Activated CD8-positive, alpha-beta T cell treated with anti-CD3 and anti-CD28 coated beads, Interleukin-2, amount 10 ng/mL, durations not matched to agents 7 days and 5 days (primary cell): ENCODE measurements at regions of chr12 and their contacts with region 1.

Region 1: DNA sequence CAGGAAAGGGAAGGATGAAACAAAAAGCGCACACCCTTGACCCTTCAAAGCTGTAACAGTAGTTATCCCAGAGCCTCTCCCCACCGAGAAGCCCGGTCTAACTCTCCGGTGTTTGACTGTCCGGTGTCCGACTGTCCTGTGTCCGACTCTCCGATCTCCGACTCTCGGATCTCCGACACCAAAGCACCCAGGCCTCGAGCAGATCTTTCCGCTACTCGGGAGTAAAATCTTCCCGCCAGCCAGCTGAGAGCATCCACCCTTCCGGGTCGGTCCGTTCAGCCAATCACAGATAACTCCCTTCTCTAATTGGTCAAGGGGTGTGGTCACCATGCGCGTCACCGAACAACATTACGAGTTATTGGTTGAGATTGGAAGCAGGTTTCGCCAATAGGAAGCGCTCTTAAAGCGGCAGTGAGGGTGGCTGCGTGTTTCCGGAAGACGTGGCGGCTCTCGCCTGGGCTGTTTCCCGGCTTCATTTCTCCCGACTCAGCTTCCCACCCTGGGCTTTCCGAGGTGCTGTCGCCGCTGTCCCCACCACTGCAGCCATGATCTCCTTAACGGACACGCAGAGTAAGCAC is at the starts of genes GOLT1B and RECQL:
- DNase-seq: peak; percentile 96
- ATAC-seq: peak; percentile 95
- H3K4me3 Mint-ChIP-seq: no peak within 1 kb of the TSS
- H3K27ac Mint-ChIP-seq: no peak within 1 kb of the TSS
- H3K4me1 Mint-ChIP-seq: peaks cover 54% of the 10 kb centered on the region
- H3K27me3 Mint-ChIP-seq: no peaks in the 10 kb centered on the region
- total RNA-seq, gene GOLT1B: 37.3 to 37.5 TPM
- total RNA-seq, gene RECQL: 92.3 to 92.6 TPM

Region 2: DNA sequence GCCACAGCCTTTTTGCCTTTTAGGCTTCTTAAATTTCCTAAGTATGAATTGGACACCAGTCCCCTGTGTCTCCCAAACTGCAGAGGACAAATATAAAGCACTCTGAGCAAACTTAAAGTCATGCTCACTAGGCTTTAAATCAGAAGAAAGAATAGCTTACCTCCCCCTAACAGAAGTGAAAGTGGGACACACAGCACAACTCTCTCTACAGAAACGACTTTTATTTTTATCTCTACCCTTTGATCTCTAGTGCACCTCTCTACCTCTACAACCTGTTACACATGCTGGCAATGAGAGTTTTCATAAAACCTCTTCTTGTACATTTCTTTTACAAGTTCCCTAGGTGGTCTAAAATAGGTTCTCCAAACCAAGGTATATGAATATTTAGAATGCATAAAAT is 109.1 kb before region 1 on chr12:
- CTCF ChIA-PET with region 1: no interaction called
- POLR2A ChIA-PET with region 1: no interaction called
- DNase-seq: no peak
- ATAC-seq: no peak
- H3K4me3 Mint-ChIP-seq: no peak overlapping the region
- H3K27ac Mint-ChIP-seq: no peak overlapping the region
- H3K4me1 Mint-ChIP-seq: no peaks in the 10 kb centered on the region
- H3K27me3 Mint-ChIP-seq: peaks cover 6% of the 10 kb centered on the region

Region 3: GRCh38 chr12:21438643-21439042 is 62.8 kb before region 1 on chr12:
- CTCF ChIA-PET with region 1: no interaction called
- POLR2A ChIA-PET with region 1: interaction called, 13 read pairs
- DNase-seq: no peak
- ATAC-seq: no peak
- H3K4me3 Mint-ChIP-seq: peak overlapping the region; percentile 92
- H3K27ac Mint-ChIP-seq: peak overlapping the region; percentile 94
- H3K4me1 Mint-ChIP-seq: peaks cover 33% of the 10 kb centered on the region
- H3K27me3 Mint-ChIP-seq: peaks cover 15% of the 10 kb centered on the region

Region 4: DNA sequence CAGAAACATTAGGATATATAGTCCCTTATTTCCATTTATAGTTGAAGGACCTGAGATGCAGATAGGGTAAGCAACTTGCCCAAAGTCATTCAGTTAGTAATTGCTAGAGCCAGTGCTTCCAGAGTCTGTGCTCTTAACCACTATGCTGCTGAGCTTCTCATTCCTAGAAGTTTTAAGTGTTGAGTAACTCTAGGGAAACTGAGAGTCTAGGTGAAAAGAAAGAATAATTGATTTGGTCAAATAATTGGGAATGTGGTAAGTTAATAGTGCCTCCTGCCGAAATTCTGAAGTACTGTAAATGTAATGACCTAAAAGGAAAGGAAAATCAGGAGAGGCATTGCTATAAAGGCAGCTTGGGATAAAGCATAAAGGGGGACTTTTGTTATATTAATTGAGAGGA is 49.9 kb before region 1 on chr12:
- CTCF ChIA-PET with region 1: interaction called, 3 read pairs
- POLR2A ChIA-PET with region 1: interaction called, 13 read pairs
- DNase-seq: no peak
- ATAC-seq: no peak
- H3K4me3 Mint-ChIP-seq: no peak overlapping the region
- H3K27ac Mint-ChIP-seq: no peak overlapping the region
- H3K4me1 Mint-ChIP-seq: peaks cover 32% of the 10 kb centered on the region
- H3K27me3 Mint-ChIP-seq: no peaks in the 10 kb centered on the region

Region 5: GRCh38 chr12:21657326-21658077 is 156.0 kb after region 1 on chr12 and contains the start of gene LDHB:
- CTCF ChIA-PET with region 1: no interaction called
- POLR2A ChIA-PET with region 1: interaction called, 22 read pairs
- DNase-seq: peak; percentile 98
- ATAC-seq: peak; percentile 97
- H3K4me3 Mint-ChIP-seq: peak within 1 kb of the TSS; percentile 99
- H3K27ac Mint-ChIP-seq: peak within 1 kb of the TSS; percentile 100
- H3K4me1 Mint-ChIP-seq: peaks cover 34% of the 10 kb centered on the region
- H3K27me3 Mint-ChIP-seq: no peaks in the 10 kb centered on the region
- total RNA-seq, gene LDHB: 1,063 to 1,149 TPM